CD14-positive monocyte (primary cell): ENCODE measurements at regions of chr3 and their contacts with region 1.

Region 1: GRCh38 chr3:187935623-187936156 is 190.4 kb upstream of the BCL6 start:
- DNase-seq: peak; percentile 45 to 71 (median 60)
- H3K4me3 ChIP-seq: peak overlapping the region in 1 of 3 experiments; percentile 34
- H3K4me3 Mint-ChIP-seq: peak overlapping the region; percentile 9 to 67
- H3K27ac ChIP-seq: peak overlapping the region; percentile 46 to 52
- H3K27ac Mint-ChIP-seq: peak overlapping the region; percentile 66 to 90 (median 85)
- H3K4me1 ChIP-seq: peaks cover 30 to 38% of the 10 kb centered on the region in 2 donors
- H3K4me1 Mint-ChIP-seq: peaks cover 42% of the 10 kb centered on the region
- H3K27me3 ChIP-seq: no peaks in the 10 kb centered on the region
- H3K27me3 Mint-ChIP-seq: peaks cover 0 to 3% (median 0%) of the 10 kb centered on the region in 3 donors
- CTCF ChIP-seq: no peak

Region 2: GRCh38 chr3:187850331-187850921 is 85.3 kb before region 1 on chr3:
- intact Hi-C with region 1: loop called in 1 of 2 experiments (anchors 10 kb)
- DNase-seq: peak; percentile 46 to 80 (median 58)
- H3K4me3 ChIP-seq: peak overlapping the region in 1 of 3 experiments; percentile 18
- H3K4me3 Mint-ChIP-seq: peak overlapping the region in 1 of 2 donors; percentile 65
- H3K27ac ChIP-seq: peak overlapping the region; percentile 25 to 68
- H3K27ac Mint-ChIP-seq: peak overlapping the region; percentile 82 to 97 (median 90)
- H3K4me1 ChIP-seq: peaks cover 39 to 51% of the 10 kb centered on the region in 2 donors
- H3K4me1 Mint-ChIP-seq: peaks cover 41% of the 10 kb centered on the region
- H3K27me3 ChIP-seq: no peaks in the 10 kb centered on the region
- H3K27me3 Mint-ChIP-seq: peaks cover 0 to 4% (median 2%) of the 10 kb centered on the region in 3 donors
- CTCF ChIP-seq: no peak

Region 3: GRCh38 chr3:187889601-187890404 is 45.9 kb before region 1 on chr3:
- intact Hi-C with region 1: no loop called
- DNase-seq: peak; percentile 34 to 62 (median 54)
- H3K4me3 ChIP-seq: peak overlapping the region in 1 of 3 experiments; percentile 40
- H3K4me3 Mint-ChIP-seq: peak overlapping the region; percentile 28 to 67
- H3K27ac ChIP-seq: peak overlapping the region in 1 of 2 donors; percentile 3
- H3K27ac Mint-ChIP-seq: peak overlapping the region in 6 of 7 donors; percentile 15 to 88 (median 76)
- H3K4me1 ChIP-seq: peaks cover 11 to 15% of the 10 kb centered on the region in 2 donors
- H3K4me1 Mint-ChIP-seq: peaks cover 16% of the 10 kb centered on the region
- H3K27me3 ChIP-seq: no peaks in the 10 kb centered on the region
- H3K27me3 Mint-ChIP-seq: no peaks in the 10 kb centered on the region
- CTCF ChIP-seq: no peak